Activated B cell treated with CpG ODN at 0.5 μM for 24 hours (primary cell): ENCODE measurements at regions of chr1 and their contacts with region 1.

Region 1: GRCh38 chr1:193366764-193367507 is 180.5 kb upstream of the B3GALT2 start:
- DNase-seq: no peak
- ATAC-seq: no peak
- H3K4me3 Mint-ChIP-seq: no peak overlapping the region
- H3K27ac Mint-ChIP-seq: no peak overlapping the region
- H3K4me1 Mint-ChIP-seq: peaks cover 9% of the 10 kb centered on the region
- H3K27me3 Mint-ChIP-seq: no peaks in the 10 kb centered on the region
- CTCF ChIP-seq: no peak

Region 2: DNA sequence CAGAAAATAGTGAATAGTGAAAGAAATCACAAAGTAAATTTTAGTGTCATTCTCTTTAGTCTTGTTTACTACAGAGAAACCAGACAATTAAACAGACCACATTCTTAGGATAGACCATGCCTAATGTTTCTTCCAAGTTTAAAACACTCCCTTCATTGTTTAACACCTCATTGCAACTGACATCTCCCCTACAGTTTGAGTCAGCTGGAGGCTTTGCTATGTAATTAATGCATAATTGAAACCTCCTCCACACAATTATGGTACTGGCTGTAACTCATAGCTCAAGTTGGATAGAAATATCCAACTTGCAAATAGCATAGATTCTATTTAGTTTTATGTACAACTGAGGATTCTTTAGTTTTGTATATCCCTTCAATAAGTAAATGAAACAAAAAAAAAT is 145.3 kb before region 1 on chr1:
- CTCF ChIA-PET with region 1: no interaction called
- POLR2A ChIA-PET with region 1: no interaction called
- intact Hi-C with region 1: no loop called
- DNase-seq: no peak
- ATAC-seq: no peak
- H3K4me3 Mint-ChIP-seq: no peak overlapping the region
- H3K27ac Mint-ChIP-seq: no peak overlapping the region
- H3K4me1 Mint-ChIP-seq: peaks cover 3% of the 10 kb centered on the region
- H3K27me3 Mint-ChIP-seq: no peaks in the 10 kb centered on the region
- CTCF ChIP-seq: no peak

Region 3: DNA sequence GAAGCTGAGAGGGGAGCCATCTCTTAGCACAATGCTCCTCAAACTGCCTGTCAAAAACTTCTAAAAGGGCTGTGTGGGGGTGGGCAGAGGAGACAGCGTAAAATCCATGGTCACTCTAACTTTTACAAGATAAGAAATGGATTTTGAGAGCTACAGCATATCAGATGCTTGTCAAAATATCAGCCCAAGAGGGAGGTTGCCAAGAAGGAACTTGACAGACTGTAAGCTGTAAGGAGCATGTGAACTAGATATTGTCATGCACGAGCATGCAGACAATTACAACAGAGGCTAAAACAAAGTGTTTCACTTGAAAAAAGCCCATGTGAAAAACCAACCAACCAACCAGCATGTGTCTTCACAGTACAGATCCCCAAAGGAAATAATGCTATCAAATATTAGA is 73.2 kb before region 1 on chr1:
- CTCF ChIA-PET with region 1: no interaction called
- POLR2A ChIA-PET with region 1: no interaction called
- intact Hi-C with region 1: no loop called
- DNase-seq: no peak
- ATAC-seq: no peak
- H3K4me3 Mint-ChIP-seq: no peak overlapping the region
- H3K27ac Mint-ChIP-seq: no peak overlapping the region
- H3K4me1 Mint-ChIP-seq: no peaks in the 10 kb centered on the region
- H3K27me3 Mint-ChIP-seq: peaks cover 2% of the 10 kb centered on the region
- CTCF ChIP-seq: no peak

Region 4: DNA sequence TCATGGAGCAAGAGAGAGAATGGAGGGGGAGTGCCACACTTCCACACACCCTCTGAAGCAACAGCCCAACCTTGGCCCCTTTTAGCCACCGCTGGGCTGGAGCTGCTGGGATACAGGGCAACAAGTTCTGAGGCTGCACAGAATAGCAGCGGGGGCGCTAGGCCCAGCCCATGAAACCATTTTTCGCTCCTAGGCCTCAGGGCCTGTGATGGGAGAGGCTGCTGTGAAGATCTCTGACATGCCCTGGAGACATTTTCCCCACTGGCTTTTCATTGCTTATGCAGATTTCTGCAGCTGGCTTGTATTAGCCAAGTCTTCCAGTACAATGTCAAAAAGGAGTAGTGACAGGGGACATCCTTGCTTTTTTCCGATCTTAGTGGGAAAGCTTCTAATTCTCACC is 21.7 kb after region 1 on chr1:
- CTCF ChIA-PET with region 1: no interaction called
- POLR2A ChIA-PET with region 1: no interaction called
- intact Hi-C with region 1: loop called (anchors 1 kb)
- DNase-seq: no peak
- ATAC-seq: no peak
- H3K4me3 Mint-ChIP-seq: no peak overlapping the region
- H3K27ac Mint-ChIP-seq: no peak overlapping the region
- H3K4me1 Mint-ChIP-seq: no peaks in the 10 kb centered on the region
- H3K27me3 Mint-ChIP-seq: no peaks in the 10 kb centered on the region
- CTCF ChIP-seq: no peak

Region 5: GRCh38 chr1:193766329-193766728 is 399.4 kb after region 1 on chr1:
- CTCF ChIA-PET with region 1: no interaction called
- POLR2A ChIA-PET with region 1: no interaction called
- intact Hi-C with region 1: no loop called
- DNase-seq: no peak
- ATAC-seq: no peak
- H3K4me3 Mint-ChIP-seq: no peak overlapping the region
- H3K27ac Mint-ChIP-seq: no peak overlapping the region
- H3K4me1 Mint-ChIP-seq: no peaks in the 10 kb centered on the region
- H3K27me3 Mint-ChIP-seq: no peaks in the 10 kb centered on the region
- CTCF ChIP-seq: no peak